Heart right ventricle (tissue), 16 donors: ENCODE measurements at regions of chr19 and their contacts with region 1.

Region 1: DNA sequence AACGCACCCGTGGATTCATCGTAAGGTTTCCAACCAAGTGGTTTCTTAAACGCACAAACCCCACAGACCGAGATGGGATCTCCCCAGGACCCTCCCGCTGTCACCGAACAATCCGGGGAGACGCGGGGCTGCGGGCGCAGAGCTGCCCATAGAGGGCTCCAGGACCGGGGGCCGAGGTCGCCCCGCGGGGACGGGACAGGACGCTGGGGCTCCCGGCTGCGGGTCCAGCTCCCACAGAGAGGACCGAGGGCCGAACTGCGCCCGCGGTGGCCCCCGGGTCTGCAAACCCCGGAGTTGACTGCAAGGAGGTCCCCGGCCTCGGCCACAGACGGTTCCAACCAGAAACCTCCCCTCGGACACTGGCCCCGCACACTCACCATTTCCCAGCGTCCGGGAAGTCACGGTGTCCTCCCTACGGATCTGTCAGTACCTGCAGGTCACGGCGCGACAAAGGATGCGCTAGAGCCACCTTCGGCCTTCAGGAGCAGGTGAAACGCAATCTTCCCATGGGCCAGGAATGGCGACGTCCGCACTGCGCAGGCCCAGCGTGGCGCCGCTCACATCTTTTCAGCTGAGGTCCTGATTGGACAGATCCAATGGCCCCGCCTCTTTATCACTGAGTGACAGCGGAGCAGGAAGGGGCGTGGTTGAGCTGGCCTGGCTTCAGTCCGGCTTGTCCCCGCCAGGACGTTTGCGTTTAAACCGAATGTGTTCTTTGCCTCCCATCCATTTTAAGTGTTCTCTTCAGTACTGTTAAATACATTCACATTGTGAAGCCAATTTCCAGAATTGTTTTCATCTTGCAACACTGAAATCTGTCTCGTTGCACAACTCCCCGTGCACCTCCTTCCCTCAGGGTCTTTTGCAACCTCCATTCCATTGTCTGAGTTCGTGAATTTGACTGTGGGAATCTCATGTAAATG is at the start of gene ZNF14:
- DNase-seq: peak; percentile 90 to 96
- ATAC-seq: peak; percentile 100
- H3K4me3 ChIP-seq: peak within 1 kb of the TSS; percentile 64 to 95 (median 86)
- H3K27ac ChIP-seq: peak within 1 kb of the TSS in 9 of 10 donors; percentile 61 to 87 (median 72)
- H3K4me1 ChIP-seq: peaks cover 0 to 20% (median 11%) of the 10 kb centered on the region in 9 donors
- H3K27me3 ChIP-seq: no peaks in the 10 kb centered on the region
- CTCF ChIP-seq: peak in 5 of 9 donors; percentile 16 to 42 (median 33)
- total RNA-seq, gene ZNF14: 2.8 to 6.6 (median 4.1) TPM

Region 2: GRCh38 chr19:19568802-19569756 is 163.8 kb before region 1 on chr19:
- intact Hi-C with region 1: no loop called
- DNase-seq: no peak
- ATAC-seq: no peak
- H3K4me3 ChIP-seq: no peak overlapping the region
- H3K27ac ChIP-seq: no peak overlapping the region
- H3K4me1 ChIP-seq: no peaks in the 10 kb centered on the region
- H3K27me3 ChIP-seq: no peaks in the 10 kb centered on the region
- CTCF ChIP-seq: no peak

Region 3: DNA sequence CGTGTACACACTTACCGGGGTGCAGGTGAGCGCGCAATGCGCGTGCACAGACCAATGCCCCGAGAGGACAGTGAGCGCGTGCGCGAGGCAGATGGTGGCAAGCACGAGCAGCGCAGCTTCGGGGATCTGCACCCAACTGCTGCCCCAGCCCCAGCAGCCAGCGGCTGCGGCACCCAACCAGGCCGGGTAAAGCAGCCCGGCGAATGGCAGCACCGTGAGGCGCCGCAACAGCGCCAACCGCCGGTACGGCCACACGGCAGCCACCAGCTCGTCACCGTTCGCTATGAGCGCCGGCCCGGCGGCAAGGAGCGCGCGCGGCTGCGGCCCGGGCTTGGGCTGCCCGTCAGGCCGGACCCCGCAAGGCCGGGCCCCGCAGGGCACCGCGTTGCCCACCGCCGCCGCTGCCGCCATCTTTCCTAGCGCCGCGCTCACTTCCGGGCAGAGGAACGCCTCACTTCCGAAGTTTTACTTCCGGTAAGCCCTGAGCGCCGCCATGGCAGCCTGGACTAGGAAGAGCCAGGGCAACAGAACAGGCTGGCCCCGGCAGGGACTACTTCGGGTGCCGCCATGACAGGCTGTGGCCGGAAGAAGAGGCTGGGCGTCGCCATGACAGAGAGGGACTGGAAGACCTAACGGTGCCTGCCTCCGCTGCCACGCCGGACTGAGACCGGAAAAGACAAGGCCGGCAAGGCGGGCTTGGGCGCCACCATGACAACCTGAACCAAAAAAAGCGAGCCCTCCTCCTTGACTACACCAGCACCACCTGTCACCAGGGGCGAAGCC is 69.4 kb before region 1 on chr19 and contains the start of gene ATP13A1:
- intact Hi-C with region 1: loop called in 2 of 10 experiments (anchors 5 kb)
- DNase-seq: peak; percentile 95 to 97
- ATAC-seq: peak; percentile 97 to 98 (median 98)
- H3K4me3 ChIP-seq: peak within 1 kb of the TSS; percentile 77 to 100 (median 93)
- H3K27ac ChIP-seq: peak within 1 kb of the TSS; percentile 86 to 98 (median 92)
- H3K4me1 ChIP-seq: peaks cover 5 to 38% (median 20%) of the 10 kb centered on the region in 9 donors
- H3K27me3 ChIP-seq: no peaks in the 10 kb centered on the region
- CTCF ChIP-seq: peak in 4 of 9 donors; percentile 9 to 42 (median 16)
- total RNA-seq, gene ATP13A1: 12.3 to 28.2 (median 18.4) TPM

Region 4: DNA sequence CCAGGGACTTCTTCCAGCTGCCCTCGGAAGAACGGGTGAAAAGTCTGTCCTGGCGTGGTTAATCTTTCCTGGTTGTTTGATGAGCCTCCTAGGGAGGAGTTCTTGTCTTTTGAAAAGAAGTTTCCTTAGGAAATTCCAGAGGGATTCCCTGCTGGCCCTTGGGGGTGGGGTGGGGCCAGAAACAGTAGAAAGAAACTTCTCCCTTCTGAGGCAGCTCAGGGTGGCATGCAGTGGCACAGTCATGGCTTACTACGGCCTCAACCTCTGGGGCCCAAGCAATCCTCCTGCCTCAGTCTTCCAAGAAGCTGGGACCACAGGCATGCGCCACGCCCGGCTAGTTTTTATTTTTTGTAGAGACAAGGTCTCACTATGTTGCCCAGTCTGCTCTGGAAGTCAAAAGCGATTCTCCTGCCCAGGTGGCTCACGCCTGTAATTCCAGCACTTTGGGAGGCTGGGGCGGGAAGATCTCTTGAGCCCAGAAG is 62.7 kb before region 1 on chr19:
- intact Hi-C with region 1: loop called in 2 of 10 experiments (anchors 5 to 10 kb)
- DNase-seq: no peak
- ATAC-seq: no peak
- H3K4me3 ChIP-seq: peak overlapping the region in 5 of 10 donors; percentile 94 to 99 (median 96)
- H3K27ac ChIP-seq: peak overlapping the region in 1 of 10 donors; percentile 96
- H3K4me1 ChIP-seq: peaks cover 0 to 23% (median 12%) of the 10 kb centered on the region in 9 donors
- H3K27me3 ChIP-seq: no peaks in the 10 kb centered on the region
- CTCF ChIP-seq: no peak

Region 5: DNA sequence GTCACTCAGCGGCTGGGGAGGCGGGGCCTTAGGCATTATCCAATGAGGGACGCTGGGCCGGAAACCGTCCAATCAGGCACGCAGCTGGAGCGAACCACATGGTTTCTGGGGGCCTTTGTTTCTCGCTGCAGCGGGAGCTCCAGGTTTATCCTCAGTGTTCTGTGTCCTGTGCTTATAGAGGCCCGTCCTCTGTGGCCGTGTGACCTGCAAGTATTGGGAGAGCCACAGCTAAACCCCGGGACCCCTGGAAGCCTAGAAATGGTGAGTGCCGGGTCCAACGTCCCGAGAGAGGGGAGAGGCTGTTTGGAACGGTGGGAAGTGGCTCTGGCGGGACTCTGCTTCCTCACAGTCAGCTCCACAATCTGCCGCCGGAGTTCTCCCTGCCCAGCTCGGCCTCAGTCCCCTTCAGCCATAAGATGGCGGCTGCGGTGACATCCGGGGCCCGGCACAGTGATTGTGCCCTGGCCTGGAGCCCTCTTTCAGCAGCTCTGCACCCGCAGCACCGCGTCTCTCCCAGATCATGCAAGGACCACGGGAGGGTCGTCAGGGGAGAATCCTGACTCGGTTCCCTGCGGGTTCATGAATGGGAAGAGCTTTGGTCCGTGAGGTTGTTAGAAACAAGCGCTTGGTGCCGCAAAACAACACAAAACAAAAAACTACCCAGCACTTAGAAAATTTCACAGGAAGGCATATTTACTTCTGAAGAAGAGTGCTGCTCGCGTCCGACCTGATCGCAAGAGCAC is 133.1 kb after region 1 on chr19 and contains the start of gene ZNF253:
- intact Hi-C with region 1: loop called in 1 of 10 experiments (anchors 5 kb)
- DNase-seq: peak; percentile 96 to 99
- ATAC-seq: peak; percentile 99 to 100 (median 99)
- H3K4me3 ChIP-seq: peak within 1 kb of the TSS; percentile 58 to 90 (median 72)
- H3K27ac ChIP-seq: peak within 1 kb of the TSS; percentile 85 to 98 (median 92)
- H3K4me1 ChIP-seq: peaks cover 0 to 49% (median 31%) of the 10 kb centered on the region in 9 donors
- H3K27me3 ChIP-seq: peaks cover 0 to 3% (median 2%) of the 10 kb centered on the region in 7 donors
- CTCF ChIP-seq: no peak
- total RNA-seq, gene ZNF253: 4.8 to 13.0 (median 9.2) TPM